ENCODE measurements at regions of chr10 and their contacts with region 1.

Region 1: DNA sequence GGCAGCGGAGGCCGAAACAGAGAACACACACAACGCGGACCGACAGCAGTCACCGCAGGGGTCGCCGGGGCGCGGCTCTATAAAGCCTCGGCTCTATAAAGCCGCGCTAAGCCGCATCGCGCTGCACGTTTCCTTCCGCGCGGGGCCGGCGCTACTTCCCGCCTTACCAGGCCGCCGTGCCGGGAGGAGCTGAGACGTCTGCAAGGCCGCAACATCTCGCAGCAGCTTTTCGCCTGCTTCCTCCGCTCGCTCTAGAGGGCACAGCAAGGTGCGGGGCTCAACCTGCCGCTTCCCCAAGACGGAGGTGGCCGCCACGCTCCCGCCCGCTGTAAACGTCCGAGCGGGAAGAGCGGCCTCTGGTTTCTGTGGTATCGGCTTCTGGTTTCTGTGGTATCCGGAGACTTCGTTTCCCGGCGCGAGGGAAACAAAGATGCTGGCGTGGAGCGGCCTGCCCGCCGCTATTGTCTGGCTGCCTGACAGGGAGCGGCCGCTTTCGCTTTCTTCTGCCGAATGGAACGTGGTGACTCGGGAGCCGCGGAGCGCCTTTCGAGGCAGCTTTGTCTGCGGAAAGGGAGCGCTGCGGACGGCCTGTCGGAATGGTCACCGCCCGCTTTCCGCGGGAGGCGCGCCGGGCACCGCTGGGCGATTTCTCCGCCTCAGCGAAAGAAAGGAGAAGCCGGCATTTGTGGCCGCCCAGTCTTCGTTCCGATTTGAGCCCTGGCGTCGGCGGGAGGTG is 91.8 kb downstream of the SPAG6 start:
- DNase-seq: peak; percentile 84 to 96 (median 90)
- ATAC-seq: peak; percentile 85
- H3K4me3 ChIP-seq: peak overlapping the region; percentile 92
- H3K4me3 Mint-ChIP-seq: peak overlapping the region; percentile 98
- H3K27ac ChIP-seq: peak overlapping the region; percentile 90 to 94
- H3K27ac Mint-ChIP-seq: peak overlapping the region; percentile 100
- H3K4me1 ChIP-seq: peaks cover 24% of the 10 kb centered on the region
- H3K4me1 Mint-ChIP-seq: peaks cover 43% of the 10 kb centered on the region
- H3K27me3 ChIP-seq: no peaks in the 10 kb centered on the region
- H3K27me3 Mint-ChIP-seq: no peaks in the 10 kb centered on the region
- CTCF ChIP-seq: peak; percentile 11

Region 2: DNA sequence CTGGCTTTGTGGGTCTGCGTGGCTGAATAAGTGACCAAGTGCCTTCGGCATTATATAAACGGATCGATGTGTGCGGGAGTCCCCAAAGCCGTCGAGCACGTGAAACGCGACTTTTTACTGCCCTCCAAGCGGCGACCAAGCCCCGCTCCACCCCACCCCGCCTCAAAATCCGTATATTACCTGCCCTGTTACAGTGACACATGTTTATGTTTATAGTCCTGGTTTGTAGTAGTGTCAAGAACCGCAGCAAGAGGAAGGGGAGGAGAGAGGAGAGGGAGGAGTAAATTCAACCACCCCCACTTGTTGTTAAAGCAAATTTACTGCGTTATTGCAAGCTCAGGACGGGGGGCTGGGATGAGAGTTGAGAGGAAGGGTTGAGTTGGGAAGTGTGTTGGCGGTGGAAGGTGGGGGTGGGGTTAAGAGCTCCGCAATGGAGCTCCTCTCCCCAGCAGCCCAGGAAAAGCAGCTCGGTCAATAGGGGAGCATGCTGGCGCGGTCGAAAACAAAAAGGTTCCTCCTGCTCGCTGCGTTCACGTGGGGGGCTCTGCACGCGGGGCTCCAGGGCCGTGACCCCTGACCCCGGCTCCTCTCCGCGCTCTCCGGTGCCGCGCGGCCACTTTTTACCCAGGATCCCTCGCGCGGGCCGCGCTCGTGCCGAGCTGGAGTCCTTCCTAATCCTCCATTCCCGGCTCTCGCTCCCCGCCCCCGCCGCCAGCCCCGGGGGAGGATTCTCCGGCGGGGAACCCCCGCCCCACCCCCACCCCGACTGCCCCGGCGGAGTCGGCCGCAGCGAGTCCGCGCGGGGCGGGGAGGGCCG is 911.5 kb before region 1 on chr10 and contains the start of gene SKIDA1:
- CTCF ChIA-PET with region 1: no interaction called
- POLR2A ChIA-PET with region 1: interaction called, 12 read pairs
- intact Hi-C with region 1: no loop called
- DNase-seq: peak in 13 of 14 experiments; percentile 33 to 83 (median 50)
- ATAC-seq: peak; percentile 79
- H3K4me3 ChIP-seq: peak within 1 kb of the TSS; percentile 80
- H3K4me3 Mint-ChIP-seq: peak within 1 kb of the TSS; percentile 98
- H3K27ac ChIP-seq: peak within 1 kb of the TSS; percentile 61 to 66
- H3K27ac Mint-ChIP-seq: peak within 1 kb of the TSS; percentile 86
- H3K4me1 ChIP-seq: peaks cover 25% of the 10 kb centered on the region
- H3K4me1 Mint-ChIP-seq: peaks cover 37% of the 10 kb centered on the region
- H3K27me3 ChIP-seq: peaks cover 5 to 26% of the 10 kb centered on the region in 2 experiments
- H3K27me3 Mint-ChIP-seq: peaks cover 36% of the 10 kb centered on the region
- CTCF ChIP-seq: no peak
- total RNA-seq, gene SKIDA1: 0.22 to 0.25 TPM

Region 3: DNA sequence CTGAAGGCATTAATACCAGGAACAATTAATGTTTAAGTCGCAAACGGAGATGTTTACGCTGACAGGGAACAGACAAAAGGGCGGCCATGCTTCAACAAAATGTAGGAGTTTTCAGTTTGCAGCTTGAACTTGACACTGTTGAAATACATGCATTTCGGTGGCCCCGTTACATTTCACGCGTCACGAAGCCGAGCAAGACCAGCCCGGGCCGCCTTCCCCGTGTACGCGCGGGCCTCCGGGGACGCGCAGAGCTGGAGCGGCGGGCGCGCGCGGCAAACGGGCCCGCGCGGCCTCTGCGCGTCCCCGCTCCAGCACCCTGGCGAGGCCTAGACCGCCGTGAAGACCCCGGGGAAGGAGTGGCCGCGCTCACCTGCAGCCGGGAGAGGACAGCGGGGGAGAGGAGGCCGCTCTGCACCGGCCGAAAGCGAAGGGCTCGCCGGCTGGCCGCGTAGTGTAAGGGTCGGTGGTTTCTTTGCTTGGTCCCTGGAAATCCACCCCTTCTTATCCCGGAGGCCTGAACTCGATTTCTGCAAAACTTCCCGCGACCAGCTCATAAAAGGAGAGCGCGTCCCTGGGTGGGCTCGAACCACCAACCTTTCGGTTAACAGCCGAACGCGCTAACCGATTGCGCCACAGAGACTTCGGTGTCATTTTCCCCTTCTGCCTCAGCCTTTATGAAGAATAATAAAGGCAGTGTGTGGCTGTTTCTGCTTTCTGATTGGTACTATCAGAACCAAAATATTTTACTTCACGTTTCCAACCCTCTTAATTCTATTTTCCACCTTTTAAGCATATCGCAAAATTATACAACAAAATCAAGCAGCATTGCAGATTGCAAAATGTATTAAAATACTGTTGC is 207.9 kb before region 1 on chr10:
- CTCF ChIA-PET with region 1: interaction called, 4 read pairs
- POLR2A ChIA-PET with region 1: interaction called, 96 read pairs
- intact Hi-C with region 1: loop called (anchors 1 to 5 kb)
- DNase-seq: peak; percentile 72 to 93 (median 82)
- ATAC-seq: peak; percentile 77
- H3K4me3 ChIP-seq: peak overlapping the region; percentile 62
- H3K4me3 Mint-ChIP-seq: peak overlapping the region; percentile 92
- H3K27ac ChIP-seq: peak overlapping the region; percentile 25 to 53
- H3K27ac Mint-ChIP-seq: peak overlapping the region; percentile 99
- H3K4me1 ChIP-seq: peaks cover 3% of the 10 kb centered on the region
- H3K4me1 Mint-ChIP-seq: peaks cover 19% of the 10 kb centered on the region
- H3K27me3 ChIP-seq: no peaks in the 10 kb centered on the region
- H3K27me3 Mint-ChIP-seq: peaks cover 11% of the 10 kb centered on the region
- CTCF ChIP-seq: no peak

Region 4: DNA sequence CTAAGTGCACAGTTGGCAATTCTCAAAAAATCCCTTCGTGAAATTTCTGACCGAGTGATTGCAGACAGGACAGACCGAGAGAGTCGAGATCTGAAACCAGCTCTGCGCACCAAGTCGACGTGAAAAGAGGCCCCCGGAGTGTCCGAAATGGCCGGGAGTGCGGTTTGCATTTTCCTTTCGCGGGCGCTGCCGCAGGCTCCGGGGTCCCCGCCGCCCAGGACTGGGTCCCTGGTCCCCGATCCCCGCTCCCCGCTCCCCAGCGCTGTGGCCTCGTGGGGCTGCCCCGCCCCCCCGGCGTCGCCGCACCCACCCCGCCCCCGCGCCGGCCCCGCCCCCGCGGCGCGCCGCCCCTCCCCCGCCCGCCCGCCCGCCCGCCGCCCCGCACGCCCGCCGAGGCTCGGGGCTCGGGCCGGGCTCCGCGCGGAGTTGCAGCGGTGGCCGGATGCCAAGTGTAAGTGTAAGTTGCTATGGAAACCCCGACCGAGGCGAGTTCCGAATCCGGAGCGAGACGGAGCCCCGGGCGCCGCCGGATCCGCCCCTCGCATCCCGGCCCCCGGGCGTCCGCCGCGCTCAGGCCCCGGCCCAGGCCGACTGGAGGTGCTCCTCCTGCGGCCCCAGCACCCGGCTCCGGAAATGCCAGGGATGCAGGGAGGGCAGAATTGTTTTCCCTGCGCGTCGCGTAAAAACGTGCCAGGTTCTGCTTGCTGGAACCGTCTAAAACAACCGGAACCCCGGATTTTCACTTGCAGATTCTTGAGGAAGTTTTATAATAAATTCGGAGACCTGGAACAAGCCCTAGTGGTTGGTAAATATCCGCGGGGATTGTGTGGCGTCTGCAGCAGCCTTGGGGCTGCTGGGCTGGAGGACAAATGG is 111.5 kb before region 1 on chr10:
- CTCF ChIA-PET with region 1: no interaction called
- POLR2A ChIA-PET with region 1: interaction called, 48 read pairs
- intact Hi-C with region 1: no loop called
- DNase-seq: peak in 13 of 14 experiments; percentile 61 to 93 (median 76)
- ATAC-seq: peak; percentile 45
- H3K4me3 ChIP-seq: peak overlapping the region; percentile 69
- H3K4me3 Mint-ChIP-seq: peak overlapping the region; percentile 87
- H3K27ac ChIP-seq: peak overlapping the region; percentile 53 to 56
- H3K27ac Mint-ChIP-seq: peak overlapping the region; percentile 85
- H3K4me1 ChIP-seq: peaks cover 23% of the 10 kb centered on the region
- H3K4me1 Mint-ChIP-seq: peaks cover 45% of the 10 kb centered on the region
- H3K27me3 ChIP-seq: peaks cover 5 to 25% of the 10 kb centered on the region in 2 experiments
- H3K27me3 Mint-ChIP-seq: peaks cover 61% of the 10 kb centered on the region
- CTCF ChIP-seq: no peak

Region 5: DNA sequence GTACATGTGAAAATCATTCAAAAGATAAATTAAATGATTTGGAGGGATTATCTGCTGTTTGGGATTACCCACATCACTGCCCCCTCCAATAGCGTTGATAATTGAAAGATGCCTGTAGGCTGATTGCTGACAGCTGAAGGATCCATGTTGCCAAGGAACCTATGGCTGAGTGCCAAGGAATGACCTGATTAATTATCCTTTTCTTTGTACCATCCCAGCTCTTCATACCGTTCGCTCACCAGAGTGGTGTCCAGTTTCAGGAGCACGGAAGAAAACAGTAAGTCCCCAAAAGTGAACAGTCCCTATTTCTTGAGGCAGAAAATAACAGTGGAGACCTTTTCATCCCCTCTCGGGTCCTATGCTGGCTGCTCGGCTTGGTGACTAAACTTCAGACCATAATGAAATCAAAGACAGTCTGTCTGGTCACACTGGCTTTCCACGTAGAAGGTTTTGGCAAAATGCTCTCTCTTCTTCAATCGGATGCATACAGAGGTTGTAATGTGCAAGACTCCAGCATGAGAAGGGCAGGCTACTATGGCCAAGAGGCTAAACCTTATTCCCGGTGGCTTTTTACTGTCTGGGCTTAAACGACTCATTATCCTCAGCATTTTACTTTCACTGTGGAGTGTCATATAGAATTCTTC is 17.0 kb after region 1 on chr10:
- CTCF ChIA-PET with region 1: interaction called, 4 read pairs
- POLR2A ChIA-PET with region 1: interaction called, 12 read pairs
- intact Hi-C with region 1: no loop called
- DNase-seq: no peak
- ATAC-seq: no peak
- H3K4me3 ChIP-seq: no peak overlapping the region
- H3K4me3 Mint-ChIP-seq: no peak overlapping the region
- H3K27ac ChIP-seq: no peak overlapping the region
- H3K27ac Mint-ChIP-seq: no peak overlapping the region
- H3K4me1 ChIP-seq: peaks cover 2% of the 10 kb centered on the region
- H3K4me1 Mint-ChIP-seq: peaks cover 9% of the 10 kb centered on the region
- H3K27me3 ChIP-seq: peaks cover 0 to 4% of the 10 kb centered on the region in 2 experiments
- H3K27me3 Mint-ChIP-seq: peaks cover 14% of the 10 kb centered on the region
- CTCF ChIP-seq: no peak

Region 6: GRCh38 chr10:22714479-22715289 is 277.6 kb after region 1 on chr10 and contains the start of gene PIP4K2A:
- CTCF ChIA-PET with region 1: no interaction called
- POLR2A ChIA-PET with region 1: interaction called, 4 read pairs
- intact Hi-C with region 1: loop called in 1 of 2 experiments (anchors 5 kb)
- DNase-seq: peak; percentile 56 to 94 (median 74)
- ATAC-seq: peak; percentile 77
- H3K4me3 ChIP-seq: peak within 1 kb of the TSS; percentile 90
- H3K4me3 Mint-ChIP-seq: peak within 1 kb of the TSS; percentile 96
- H3K27ac ChIP-seq: peak within 1 kb of the TSS; percentile 77 to 86
- H3K27ac Mint-ChIP-seq: peak within 1 kb of the TSS; percentile 88
- H3K4me1 ChIP-seq: peaks cover 16% of the 10 kb centered on the region
- H3K4me1 Mint-ChIP-seq: peaks cover 38% of the 10 kb centered on the region
- H3K27me3 ChIP-seq: no peaks in the 10 kb centered on the region
- H3K27me3 Mint-ChIP-seq: no peaks in the 10 kb centered on the region
- CTCF ChIP-seq: no peak
- total RNA-seq, gene PIP4K2A: 75.4 to 87.2 TPM

Region 7: GRCh38 chr10:22891797-22892196 is 454.7 kb after region 1 on chr10:
- CTCF ChIA-PET with region 1: no interaction called
- POLR2A ChIA-PET with region 1: no interaction called
- intact Hi-C with region 1: no loop called
- DNase-seq: no peak
- ATAC-seq: no peak
- H3K4me3 ChIP-seq: no peak overlapping the region
- H3K4me3 Mint-ChIP-seq: no peak overlapping the region
- H3K27ac ChIP-seq: no peak overlapping the region
- H3K27ac Mint-ChIP-seq: no peak overlapping the region
- H3K4me1 ChIP-seq: no peaks in the 10 kb centered on the region
- H3K4me1 Mint-ChIP-seq: no peaks in the 10 kb centered on the region
- H3K27me3 ChIP-seq: no peaks in the 10 kb centered on the region
- H3K27me3 Mint-ChIP-seq: peaks cover 2% of the 10 kb centered on the region
- CTCF ChIP-seq: no peak